ENCODE measurements at regions of chr4 and their contacts with region 1.

Region 1: GRCh38 chr4:15882675-15883086 is 55.9 kb downstream of the FGFBP1 start:
- DNase-seq: no peak
- ATAC-seq: peak; percentile 97

Region 2: GRCh38 chr4:15690020-15690809 is 192.5 kb before region 1 on chr4:
- intact Hi-C with region 1: no loop called
- DNase-seq: no peak
- ATAC-seq: peak; percentile 83

Region 3: GRCh38 chr4:15744016-15744545 is 138.6 kb before region 1 on chr4:
- intact Hi-C with region 1: no loop called
- DNase-seq: no peak
- ATAC-seq: no peak

Region 4: GRCh38 chr4:15894921-15895916 is 12.5 kb after region 1 on chr4:
- intact Hi-C with region 1: no loop called
- DNase-seq: no peak
- ATAC-seq: no peak

Region 5: GRCh38 chr4:15956179-15956850 is 73.6 kb after region 1 on chr4:
- intact Hi-C with region 1: loop called (anchors 5 kb)
- DNase-seq: peak; percentile 80
- ATAC-seq: peak; percentile 94

Region 6: DNA sequence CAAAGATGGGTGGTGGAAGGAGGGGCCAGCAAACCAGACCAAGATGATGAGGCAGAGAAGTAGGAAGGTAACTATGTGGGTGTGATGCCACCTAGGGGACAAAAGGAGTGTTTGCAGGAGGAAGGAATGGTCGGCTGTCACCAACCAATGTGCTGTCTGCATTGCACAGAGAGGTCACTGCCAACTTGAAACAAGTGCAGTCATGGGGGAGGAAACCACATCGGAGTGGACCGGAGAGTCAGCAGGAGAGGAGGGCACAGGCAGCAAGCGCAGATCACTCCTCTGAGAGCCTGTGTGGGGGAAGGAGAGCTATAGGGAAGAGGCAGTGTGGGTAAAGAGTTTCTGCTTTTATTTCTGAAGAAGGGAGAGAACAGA is 118.8 kb after region 1 on chr4:
- intact Hi-C with region 1: loop called (anchors 5 kb)
- DNase-seq: peak; percentile 48
- ATAC-seq: peak; percentile 96

Region 7: GRCh38 chr4:16123356-16124084 is 240.8 kb after region 1 on chr4:
- intact Hi-C with region 1: no loop called
- DNase-seq: no peak
- ATAC-seq: peak; percentile 16

Region 8: DNA sequence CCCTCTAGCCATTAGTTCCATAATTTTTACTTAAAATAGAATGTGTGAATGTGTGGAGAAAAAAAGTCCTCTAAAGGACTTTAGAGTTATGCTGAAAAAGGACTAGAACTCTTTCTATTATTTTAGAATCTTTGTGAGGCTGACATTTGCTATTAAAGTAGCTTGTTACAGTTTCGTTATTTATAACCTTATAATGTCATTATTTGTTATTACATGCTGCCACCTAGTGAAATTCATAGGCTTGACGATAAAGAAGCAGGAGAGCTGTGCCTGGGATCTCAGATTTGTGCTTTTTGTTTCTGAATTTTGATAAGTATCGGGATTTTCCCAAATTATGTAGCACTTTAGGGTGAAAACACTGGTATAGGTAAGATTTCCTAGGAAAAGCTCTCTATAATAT is 382.1 kb after region 1 on chr4:
- intact Hi-C with region 1: loop called (anchors 5 kb)
- DNase-seq: no peak
- ATAC-seq: peak; percentile 81